ENCODE measurements at regions of chr18 and their contacts with region 1.

Region 1: GRCh38 chr18:58124475-58124874 is 80.4 kb downstream of the NEDD4L start:
- DNase-seq: no peak
- ATAC-seq: no peak
- H3K4me3 ChIP-seq: no peak overlapping the region
- H3K27ac ChIP-seq: no peak overlapping the region
- H3K4me1 ChIP-seq: peaks cover 7% of the 10 kb centered on the region; the same call in 1 of the 2 replicates
- H3K27me3 ChIP-seq: no peaks in the 10 kb centered on the region
- CTCF ChIP-seq: no peak
- POLR2A ChIP-seq: no peak
- RAD21 ChIP-seq: no peak

Region 2: DNA sequence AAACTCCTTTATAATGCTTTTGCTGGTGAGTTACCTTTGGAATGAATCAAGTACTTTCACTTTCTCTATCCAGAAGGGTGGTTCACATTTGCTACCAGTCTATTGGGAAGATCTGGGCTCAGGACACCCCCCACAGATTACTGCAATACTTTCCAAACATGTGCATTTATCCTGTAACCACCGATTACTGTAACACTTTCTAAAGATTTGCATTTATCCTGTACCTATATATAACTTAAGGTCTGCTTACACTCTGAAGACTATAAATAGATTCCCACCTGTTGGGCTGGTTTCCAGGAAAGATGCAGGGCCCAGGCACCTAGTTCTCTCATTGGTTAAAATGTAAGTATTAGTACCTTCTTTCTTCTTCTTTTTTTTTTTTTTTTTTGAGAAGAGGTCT is 193.4 kb before region 1 on chr18:
- CTCF ChIA-PET with region 1: no interaction called
- POLR2A ChIA-PET with region 1: no interaction called
- dilution Hi-C with region 1: no loop called
- in situ Hi-C with region 1: no loop called
- intact Hi-C with region 1: no loop called
- DNase-seq: no peak
- ATAC-seq: no peak
- H3K4me3 ChIP-seq: no peak overlapping the region
- H3K27ac ChIP-seq: no peak overlapping the region
- H3K4me1 ChIP-seq: no peaks in the 10 kb centered on the region
- H3K27me3 ChIP-seq: no peaks in the 10 kb centered on the region
- CTCF ChIP-seq: no peak
- POLR2A ChIP-seq: no peak
- RAD21 ChIP-seq: no peak

Region 3: DNA sequence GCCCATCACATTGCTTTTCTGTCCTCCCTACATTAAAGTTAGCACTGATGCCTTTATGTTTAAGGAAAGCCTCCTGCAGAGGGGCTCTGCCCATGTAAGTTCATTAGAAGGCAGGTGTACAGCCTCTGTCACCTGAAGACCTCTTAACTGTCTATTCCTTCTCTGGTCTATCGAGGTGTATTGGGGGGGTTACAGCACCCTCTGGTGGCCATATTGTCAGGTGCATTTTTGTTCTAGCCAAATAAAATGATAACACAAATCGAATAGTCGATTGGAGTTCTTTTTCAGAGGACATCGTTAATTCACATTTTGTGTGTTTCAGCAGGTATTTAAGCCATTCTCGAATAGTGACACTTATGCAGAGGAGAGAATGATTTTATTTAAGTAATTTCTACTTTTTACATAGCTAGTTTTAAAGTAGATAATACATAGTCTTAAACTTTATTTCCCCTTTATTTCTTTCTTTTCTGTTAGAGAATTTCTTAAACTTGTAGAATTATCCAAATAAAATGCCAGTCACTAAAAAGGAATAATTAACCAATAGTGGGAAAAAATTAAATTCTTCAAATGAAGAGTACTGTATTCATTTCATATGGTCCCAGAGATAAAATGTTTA is 56.4 kb after region 1 on chr18:
- CTCF ChIA-PET with region 1: interaction called, 6 read pairs
- POLR2A ChIA-PET with region 1: no interaction called
- dilution Hi-C with region 1: no loop called
- in situ Hi-C with region 1: no loop called
- intact Hi-C with region 1: loop called (anchors 5 kb)
- DNase-seq: peak; percentile 47
- ATAC-seq: no peak
- H3K4me3 ChIP-seq: no peak overlapping the region
- H3K27ac ChIP-seq: no peak overlapping the region
- H3K4me1 ChIP-seq: peaks cover 23% of the 10 kb centered on the region
- H3K27me3 ChIP-seq: no peaks in the 10 kb centered on the region
- CTCF ChIP-seq: peak; percentile 77
- POLR2A ChIP-seq: no peak
- RAD21 ChIP-seq: peak; percentile 70

Region 4: GRCh38 chr18:58231930-58232329 is 107.5 kb after region 1 on chr18:
- CTCF ChIA-PET with region 1: no interaction called
- POLR2A ChIA-PET with region 1: no interaction called
- dilution Hi-C with region 1: no loop called
- in situ Hi-C with region 1: no loop called
- intact Hi-C with region 1: no loop called
- DNase-seq: no peak
- ATAC-seq: no peak; the same call in 1 of the 2 replicates
- H3K4me3 ChIP-seq: no peak overlapping the region
- H3K27ac ChIP-seq: no peak overlapping the region
- H3K4me1 ChIP-seq: peaks cover 2% of the 10 kb centered on the region; the same call in 1 of the 2 replicates
- H3K27me3 ChIP-seq: no peaks in the 10 kb centered on the region
- CTCF ChIP-seq: peak; percentile 34
- POLR2A ChIP-seq: no peak
- RAD21 ChIP-seq: peak; percentile 37

Region 5: GRCh38 chr18:58257461-58257860 is 133.0 kb after region 1 on chr18:
- CTCF ChIA-PET with region 1: no interaction called
- POLR2A ChIA-PET with region 1: no interaction called
- dilution Hi-C with region 1: no loop called
- in situ Hi-C with region 1: no loop called
- intact Hi-C with region 1: no loop called
- DNase-seq: peak; percentile 68
- ATAC-seq: peak; percentile 64
- H3K4me3 ChIP-seq: no peak overlapping the region
- H3K27ac ChIP-seq: no peak overlapping the region
- H3K4me1 ChIP-seq: peaks cover 9% of the 10 kb centered on the region; the same call in 1 of the 2 replicates
- H3K27me3 ChIP-seq: no peaks in the 10 kb centered on the region
- CTCF ChIP-seq: no peak
- POLR2A ChIP-seq: no peak
- RAD21 ChIP-seq: no peak

Region 6: DNA sequence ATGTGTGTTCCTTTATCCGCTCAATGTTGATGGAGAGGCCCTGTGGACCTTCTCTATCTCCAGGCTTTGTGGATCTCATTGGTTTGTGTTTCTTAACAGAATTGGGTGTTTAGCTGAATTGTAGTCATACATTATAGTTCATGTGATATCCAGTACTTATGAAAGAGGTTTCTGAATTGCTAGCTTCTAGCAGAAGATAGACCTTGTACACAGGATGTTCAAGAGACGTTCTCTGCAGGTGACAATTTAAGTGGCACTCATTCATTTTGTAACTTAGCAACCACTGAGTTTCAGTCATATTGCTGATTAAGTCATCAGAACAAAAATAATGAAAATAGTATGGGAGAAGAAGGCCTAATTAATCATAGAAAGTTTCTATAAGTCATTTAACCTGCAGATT is 225.2 kb after region 1 on chr18:
- CTCF ChIA-PET with region 1: no interaction called
- POLR2A ChIA-PET with region 1: no interaction called
- dilution Hi-C with region 1: no loop called
- in situ Hi-C with region 1: no loop called
- intact Hi-C with region 1: no loop called
- DNase-seq: no peak
- ATAC-seq: no peak
- H3K4me3 ChIP-seq: no peak overlapping the region
- H3K27ac ChIP-seq: no peak overlapping the region
- H3K4me1 ChIP-seq: no peaks in the 10 kb centered on the region
- H3K27me3 ChIP-seq: no peaks in the 10 kb centered on the region
- CTCF ChIP-seq: no peak
- POLR2A ChIP-seq: no peak
- RAD21 ChIP-seq: no peak

Measured in IMR-90 (cell line).